ENCODE measurements at regions of chr4 and their contacts with region 1.

Region 1: GRCh38 chr4:112938461-112939058 is 110.9 kb upstream of the ANK2 start:
- DNase-seq: no peak
- ATAC-seq: no peak

Region 2: DNA sequence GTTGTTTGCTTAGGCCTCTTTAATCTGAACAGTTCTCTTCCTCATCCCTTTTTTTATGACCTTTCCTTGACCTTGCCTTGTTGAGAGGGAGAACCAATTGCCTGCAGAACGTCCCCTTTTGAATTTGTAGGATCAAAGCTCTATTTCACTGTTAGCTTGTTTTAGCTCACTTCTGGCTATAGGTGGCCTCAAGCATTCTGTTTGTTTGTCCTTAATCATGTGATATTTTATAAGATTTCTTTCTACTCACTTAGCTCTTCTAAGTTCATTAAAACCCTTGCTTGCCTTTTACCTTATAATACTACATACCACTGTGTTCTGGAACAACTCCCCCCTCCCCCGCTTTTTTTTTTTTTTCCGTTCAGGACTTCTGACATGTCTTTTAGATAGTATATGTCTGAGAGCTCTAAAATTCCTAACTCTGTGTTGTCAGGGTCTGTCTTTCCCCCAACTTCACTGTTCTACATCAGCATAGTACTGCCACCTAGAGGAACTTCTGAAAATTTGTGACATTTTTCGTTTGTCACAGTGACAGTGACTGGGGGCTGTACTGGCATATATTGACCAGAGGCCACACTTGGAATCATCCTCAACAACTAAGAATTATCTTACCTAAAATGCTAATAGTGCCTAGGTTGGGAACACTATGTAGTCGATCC is 173.1 kb before region 1 on chr4:
- intact Hi-C with region 1: loop called (anchors 5 kb)
- DNase-seq: no peak
- ATAC-seq: peak; percentile 59

Region 3: DNA sequence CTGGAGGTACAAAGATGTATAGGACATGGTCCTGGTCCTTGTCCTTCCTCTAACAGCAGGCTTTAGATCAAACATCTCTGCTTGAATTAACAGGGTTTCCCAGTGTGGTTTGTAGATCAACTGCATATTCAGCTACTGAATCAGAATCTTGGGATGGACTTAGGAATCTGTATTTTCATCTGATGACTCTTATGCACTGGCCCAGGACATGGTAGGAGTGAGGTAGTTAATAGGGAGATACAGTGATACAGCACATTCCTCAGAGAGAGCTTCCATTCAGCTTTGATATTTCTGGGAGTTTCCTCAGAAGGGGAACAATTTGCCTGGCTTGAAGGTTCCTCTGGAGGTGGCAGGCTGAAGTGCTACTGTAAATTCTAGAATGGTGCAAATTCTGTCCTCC is 98.5 kb before region 1 on chr4:
- intact Hi-C with region 1: no loop called
- DNase-seq: no peak
- ATAC-seq: no peak

Region 4: DNA sequence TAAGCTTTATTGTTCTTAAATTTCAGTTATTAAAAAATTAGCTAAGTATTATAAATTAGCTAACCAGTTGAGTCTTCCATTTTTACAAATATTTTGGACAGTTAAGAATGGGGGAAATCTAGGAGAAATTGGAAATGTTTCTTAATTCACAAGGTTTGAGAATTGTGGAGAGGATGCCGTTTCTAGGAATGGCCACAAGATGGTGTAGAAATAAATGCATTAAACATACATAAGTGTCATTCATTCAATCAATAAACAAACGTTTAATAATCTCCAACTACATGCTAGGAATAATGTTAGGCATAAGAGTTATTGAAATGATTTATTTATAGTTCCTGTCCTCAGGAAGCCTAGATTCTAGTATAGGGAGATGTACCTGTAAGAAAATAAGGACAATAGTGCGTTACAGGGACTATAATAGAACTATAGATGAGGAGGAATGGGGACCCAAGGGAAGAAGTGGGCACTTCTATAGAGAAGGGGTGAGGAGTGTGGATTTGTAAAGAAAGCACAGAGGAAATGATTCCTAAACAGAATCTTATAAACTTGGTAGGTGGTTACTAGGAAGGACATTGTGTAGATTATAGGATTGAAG is 84.8 kb before region 1 on chr4:
- intact Hi-C with region 1: loop called (anchors 10 kb)
- DNase-seq: no peak
- ATAC-seq: no peak

Region 5: GRCh38 chr4:113256946-113257345 is 318.4 kb after region 1 on chr4:
- intact Hi-C with region 1: no loop called
- DNase-seq: no peak
- ATAC-seq: no peak

Region 6: GRCh38 chr4:113300471-113300928 is 361.9 kb after region 1 on chr4:
- intact Hi-C with region 1: no loop called
- DNase-seq: no peak
- ATAC-seq: peak; percentile 98

Measured in Right ventricle myocardium inferior (tissue), 1 donor.